Gastrocnemius medialis (tissue), 4 donors: ENCODE measurements at regions of chr7 and their contacts with region 1.

Region 1: DNA sequence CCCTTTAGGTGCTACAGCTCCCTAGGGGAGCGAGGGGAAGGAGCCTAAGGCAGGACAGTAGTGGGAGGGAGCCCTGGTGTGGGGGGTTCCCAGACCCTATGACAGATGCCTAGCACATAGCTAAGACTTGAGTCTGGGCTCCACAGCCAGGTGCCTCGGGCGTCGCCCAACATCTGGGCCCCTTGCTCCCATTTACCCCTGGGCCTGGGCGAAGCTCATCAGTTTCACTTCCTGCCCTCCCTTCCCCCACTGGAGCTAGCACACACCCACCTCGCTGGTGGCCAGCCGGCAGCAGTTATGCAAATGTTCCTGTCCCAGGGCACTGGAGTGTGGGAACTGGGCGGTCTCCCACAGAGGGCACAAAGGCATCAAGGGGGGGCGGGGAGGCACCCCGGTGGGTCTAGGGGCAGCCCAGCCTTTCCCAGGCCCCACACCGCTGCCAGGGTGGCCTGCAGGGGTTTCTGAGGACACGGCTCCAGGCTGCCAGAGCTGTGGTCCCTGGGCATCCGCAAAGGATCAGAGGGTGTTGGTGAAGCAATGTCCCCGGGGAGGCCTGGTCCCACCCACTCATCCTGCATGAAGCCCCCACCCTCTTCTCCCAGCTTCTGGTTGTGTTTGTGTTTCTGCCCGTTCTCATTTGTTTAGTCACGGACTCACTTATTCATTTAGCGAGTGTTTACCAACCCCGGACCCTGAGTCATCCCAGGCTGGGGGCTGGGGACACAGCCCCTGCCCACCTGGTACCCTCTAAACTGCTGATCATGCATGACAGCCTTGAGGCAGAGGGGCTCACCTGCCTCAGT is 20.4 kb downstream of the SH2B2 start:
- DNase-seq: peak; percentile 76 to 90
- ATAC-seq: peak; percentile 67 to 70
- H3K4me3 ChIP-seq: peak overlapping the region in 3 of 4 donors; percentile 20 to 40 (median 35)
- H3K27ac ChIP-seq: peak overlapping the region; percentile 61 to 98 (median 96)
- H3K4me1 ChIP-seq: peaks cover 56 to 57% of the 10 kb centered on the region in 2 donors
- H3K27me3 ChIP-seq: no peaks in the 10 kb centered on the region
- CTCF ChIP-seq: no peak
- POLR2A ChIP-seq: no peak

Region 2: GRCh38 chr7:102286237-102287110 is 20.6 kb before region 1 on chr7 and contains the start of gene SH2B2:
- in situ Hi-C with region 1: no loop called
- intact Hi-C with region 1: loop called (anchors 2 kb)
- DNase-seq: peak; percentile 48 to 71
- ATAC-seq: peak; percentile 64 to 73
- H3K4me3 ChIP-seq: peak within 1 kb of the TSS; percentile 88 to 98 (median 90)
- H3K27ac ChIP-seq: peak within 1 kb of the TSS; percentile 83 to 94 (median 90)
- H3K4me1 ChIP-seq: peaks cover 27 to 30% of the 10 kb centered on the region in 2 donors
- H3K27me3 ChIP-seq: no peaks in the 10 kb centered on the region
- CTCF ChIP-seq: peak in 1 of 5 experiments; percentile 18
- POLR2A ChIP-seq: peak; percentile 68 to 85
- total RNA-seq, gene SH2B2: 32.7 to 62.0 (median 43.5) TPM